PC-3 (cell line): ENCODE measurements at regions of chr10 and their contacts with region 1.

Region 1: GRCh38 chr10:4283846-4284610 is 499.0 kb upstream of the KLF6 start:
- DNase-seq: no peak
- ATAC-seq: no peak
- H3K4me3 ChIP-seq: no peak overlapping the region
- H3K27ac ChIP-seq: no peak overlapping the region
- H3K4me1 ChIP-seq: peaks cover 29% of the 10 kb centered on the region
- H3K27me3 ChIP-seq: no peaks in the 10 kb centered on the region
- CTCF ChIP-seq: no peak

Region 2: GRCh38 chr10:4059471-4060138 is 224.4 kb before region 1 on chr10:
- CTCF ChIA-PET with region 1: no interaction called
- POLR2A ChIA-PET with region 1: no interaction called
- intact Hi-C with region 1: loop called (anchors 5 kb)
- DNase-seq: no peak
- ATAC-seq: no peak
- H3K4me3 ChIP-seq: no peak overlapping the region
- H3K27ac ChIP-seq: no peak overlapping the region
- H3K4me1 ChIP-seq: peaks cover 17% of the 10 kb centered on the region
- H3K27me3 ChIP-seq: no peaks in the 10 kb centered on the region
- CTCF ChIP-seq: no peak

Region 3: DNA sequence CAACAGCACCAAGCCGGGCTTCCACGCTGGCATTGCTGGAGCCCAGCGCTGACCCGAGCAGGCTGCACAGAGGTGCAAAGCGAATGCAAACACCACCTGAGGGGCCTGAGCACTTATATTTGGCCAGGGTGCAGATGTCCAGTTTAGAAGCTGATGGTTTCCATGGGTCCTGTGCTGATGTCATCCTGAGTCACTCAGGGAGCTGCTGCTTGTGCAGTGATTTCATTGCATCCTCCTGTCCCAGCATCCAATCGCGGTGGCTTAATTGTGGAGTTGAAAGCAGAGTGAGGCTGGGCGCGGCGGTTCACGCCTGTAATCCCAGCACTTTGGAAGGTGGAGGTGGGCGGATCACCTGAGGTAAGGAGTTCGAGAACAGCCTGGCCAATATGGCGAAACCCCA is 88.8 kb before region 1 on chr10:
- CTCF ChIA-PET with region 1: no interaction called
- POLR2A ChIA-PET with region 1: no interaction called
- intact Hi-C with region 1: loop called (anchors 1 kb)
- DNase-seq: peak; percentile 78
- ATAC-seq: peak; percentile 48
- H3K4me3 ChIP-seq: no peak overlapping the region
- H3K27ac ChIP-seq: peak overlapping the region; percentile 100
- H3K4me1 ChIP-seq: peaks cover 37% of the 10 kb centered on the region
- H3K27me3 ChIP-seq: no peaks in the 10 kb centered on the region
- CTCF ChIP-seq: no peak

Region 4: DNA sequence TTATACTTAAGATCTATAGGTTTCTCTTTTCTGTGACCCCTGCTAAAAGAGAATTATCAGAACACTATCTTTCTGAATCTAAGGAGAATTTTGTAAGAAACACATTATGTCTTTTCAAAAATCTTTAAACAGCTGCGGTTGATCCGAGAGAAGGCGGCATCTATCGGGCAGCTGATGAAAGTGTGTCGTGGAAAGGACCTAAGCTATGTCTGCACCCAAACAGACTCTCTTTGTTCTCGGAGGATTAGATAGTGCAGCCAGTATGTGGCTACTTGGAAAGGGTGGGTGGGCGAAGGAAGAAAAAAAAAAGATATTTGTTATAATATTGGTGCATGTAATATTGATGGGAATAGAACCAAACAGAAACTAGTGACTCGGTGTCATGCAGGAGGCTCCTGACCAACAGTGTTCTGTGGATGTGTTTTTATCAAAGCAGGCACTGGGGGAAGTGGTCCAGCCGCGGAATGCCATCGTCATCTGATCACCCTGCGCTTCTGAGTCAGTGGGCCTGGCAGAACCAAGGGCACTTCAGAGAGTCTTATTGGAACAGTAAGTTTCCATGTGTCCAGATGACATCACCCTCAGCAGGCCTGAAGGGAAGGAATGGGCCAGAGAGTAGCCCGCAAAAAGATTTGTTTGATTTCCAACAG is 32.3 kb after region 1 on chr10:
- CTCF ChIA-PET with region 1: no interaction called
- POLR2A ChIA-PET with region 1: no interaction called
- intact Hi-C with region 1: no loop called
- DNase-seq: no peak
- ATAC-seq: no peak
- H3K4me3 ChIP-seq: no peak overlapping the region
- H3K27ac ChIP-seq: no peak overlapping the region
- H3K4me1 ChIP-seq: no peaks in the 10 kb centered on the region
- H3K27me3 ChIP-seq: no peaks in the 10 kb centered on the region
- CTCF ChIP-seq: no peak

Region 5: GRCh38 chr10:4353964-4354363 is 69.9 kb after region 1 on chr10:
- CTCF ChIA-PET with region 1: no interaction called
- POLR2A ChIA-PET with region 1: no interaction called
- intact Hi-C with region 1: loop called (anchors 1 kb)
- DNase-seq: peak; percentile 81
- ATAC-seq: peak; percentile 75
- H3K4me3 ChIP-seq: no peak overlapping the region; the same call in 1 of the 2 replicates
- H3K27ac ChIP-seq: peak overlapping the region; percentile 92
- H3K4me1 ChIP-seq: peaks cover 33% of the 10 kb centered on the region
- H3K27me3 ChIP-seq: no peaks in the 10 kb centered on the region
- CTCF ChIP-seq: no peak

Region 6: DNA sequence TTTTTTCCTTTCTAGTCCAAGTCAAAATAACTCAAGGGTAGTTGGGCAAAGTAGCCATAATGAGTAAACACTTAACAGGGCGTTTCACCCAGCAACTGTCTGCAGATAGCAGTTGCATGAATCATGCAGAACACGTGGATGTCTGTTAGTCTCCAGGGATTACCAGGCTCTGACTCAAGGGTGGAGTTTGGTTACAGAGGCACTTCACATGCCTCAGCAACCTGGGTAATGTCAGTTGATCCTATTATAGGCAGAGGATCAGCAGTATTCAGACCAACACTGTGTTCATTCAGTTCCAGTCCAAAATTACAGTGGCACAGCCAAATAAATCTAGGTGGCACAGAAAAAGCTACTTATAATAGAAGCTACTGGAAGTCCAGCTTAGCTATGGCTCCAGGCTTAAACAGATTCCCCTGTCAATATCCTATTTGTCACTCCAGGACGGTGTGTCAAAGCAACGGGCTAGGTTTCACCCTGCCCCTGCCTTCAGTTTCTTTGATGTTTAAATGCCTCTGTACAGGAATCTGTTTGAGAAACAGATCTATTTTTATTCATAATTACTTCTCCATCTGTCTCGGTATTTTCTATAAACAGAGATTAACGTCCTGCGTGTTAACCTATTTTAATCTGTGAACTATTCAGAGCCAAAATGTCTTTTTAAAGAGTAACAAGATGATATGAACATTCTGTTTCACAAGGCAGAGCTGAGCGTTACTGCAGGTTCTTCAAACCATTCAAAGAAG is 379.3 kb after region 1 on chr10:
- CTCF ChIA-PET with region 1: no interaction called
- POLR2A ChIA-PET with region 1: no interaction called
- intact Hi-C with region 1: loop called (anchors 2 kb)
- DNase-seq: peak; percentile 93
- ATAC-seq: peak; percentile 93
- H3K4me3 ChIP-seq: no peak overlapping the region
- H3K27ac ChIP-seq: peak overlapping the region; percentile 98
- H3K4me1 ChIP-seq: peaks cover 45% of the 10 kb centered on the region
- H3K27me3 ChIP-seq: no peaks in the 10 kb centered on the region
- CTCF ChIP-seq: no peak